AG04450 (cell line): ENCODE measurements at regions of chr13 and their contacts with region 1.

Region 1: GRCh38 chr13:108082481-108082880 is 132.9 kb downstream of the LIG4 start:
- DNase-seq: no peak
- H3K4me3 ChIP-seq: no peak overlapping the region
- H3K27ac ChIP-seq: no peak overlapping the region
- H3K27me3 ChIP-seq: peaks cover 3% of the 10 kb centered on the region
- CTCF ChIP-seq: no peak

Region 2: GRCh38 chr13:107977071-107977574 is 105.4 kb before region 1 on chr13:
- CTCF ChIA-PET with region 1: interaction called, 10 read pairs
- POLR2A ChIA-PET with region 1: no interaction called
- DNase-seq: no peak
- H3K4me3 ChIP-seq: no peak overlapping the region
- H3K27ac ChIP-seq: no peak overlapping the region
- H3K27me3 ChIP-seq: no peaks in the 10 kb centered on the region
- CTCF ChIP-seq: no peak